Heart right ventricle (tissue), 16 donors: ENCODE measurements at regions of chr4 and their contacts with region 1.

Region 1: DNA sequence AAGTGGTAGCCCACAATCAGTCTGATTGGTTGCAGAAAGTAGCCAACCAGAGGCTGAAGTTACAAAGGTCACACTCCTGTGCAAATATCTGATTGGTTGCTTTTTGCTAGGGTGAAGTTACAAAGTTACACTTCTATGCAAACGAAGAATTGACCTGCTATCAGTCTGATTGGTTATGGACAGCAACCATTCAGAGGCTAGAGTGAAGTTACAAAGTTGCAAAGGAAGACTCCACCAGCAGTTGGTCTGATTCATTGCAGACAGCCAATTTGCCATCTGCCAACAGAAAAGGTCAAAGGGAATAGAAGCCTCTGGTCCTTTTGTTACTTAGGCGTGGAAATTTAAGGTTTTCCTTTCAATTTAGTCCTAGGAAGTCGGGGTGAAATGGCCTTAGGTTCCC is 377.7 kb downstream of the PRDM5 start:
- DNase-seq: no peak
- ATAC-seq: no peak
- H3K4me3 ChIP-seq: no peak overlapping the region
- H3K27ac ChIP-seq: no peak overlapping the region
- H3K4me1 ChIP-seq: no peaks in the 10 kb centered on the region
- H3K27me3 ChIP-seq: no peaks in the 10 kb centered on the region
- CTCF ChIP-seq: no peak

Region 2: DNA sequence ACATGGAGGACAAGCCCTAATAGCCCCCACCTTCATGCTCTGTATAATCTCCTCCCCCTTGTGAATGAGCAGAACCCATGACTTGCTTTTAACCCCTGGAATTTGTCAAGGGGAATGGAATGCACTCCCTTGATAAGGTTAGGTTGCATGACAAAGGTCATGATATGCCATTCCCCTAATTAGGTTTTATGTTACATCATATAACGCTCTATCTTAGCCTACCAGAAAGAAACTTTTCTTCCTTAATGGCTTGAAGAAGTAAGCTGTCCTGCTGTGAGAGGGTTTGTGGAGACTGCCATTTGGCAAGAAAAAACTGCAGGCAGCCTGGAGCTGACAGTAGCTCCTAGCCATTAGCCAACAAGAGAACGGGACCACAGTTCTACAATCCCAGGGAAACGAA is 78.4 kb before region 1 on chr4:
- intact Hi-C with region 1: no loop called
- DNase-seq: no peak
- ATAC-seq: peak in 4 of 8 donors; percentile 37 to 67 (median 40)
- H3K4me3 ChIP-seq: no peak overlapping the region
- H3K27ac ChIP-seq: no peak overlapping the region
- H3K4me1 ChIP-seq: peaks cover 0 to 9% (median 0%) of the 10 kb centered on the region in 9 donors
- H3K27me3 ChIP-seq: no peaks in the 10 kb centered on the region
- CTCF ChIP-seq: no peak

Region 3: GRCh38 chr4:120498678-120499077 is 46.2 kb before region 1 on chr4:
- intact Hi-C with region 1: loop called in 1 of 10 experiments (anchors 1 kb)
- DNase-seq: no peak
- ATAC-seq: no peak
- H3K4me3 ChIP-seq: no peak overlapping the region
- H3K27ac ChIP-seq: no peak overlapping the region
- H3K4me1 ChIP-seq: no peaks in the 10 kb centered on the region
- H3K27me3 ChIP-seq: no peaks in the 10 kb centered on the region
- CTCF ChIP-seq: no peak

Region 4: GRCh38 chr4:121227341-121227792 is 682.5 kb after region 1 on chr4:
- intact Hi-C with region 1: no loop called
- DNase-seq: no peak
- ATAC-seq: no peak
- H3K4me3 ChIP-seq: peak overlapping the region in 1 of 10 donors; percentile 5
- H3K27ac ChIP-seq: peak overlapping the region in 1 of 10 donors; percentile 34
- H3K4me1 ChIP-seq: no peaks in the 10 kb centered on the region
- H3K27me3 ChIP-seq: no peaks in the 10 kb centered on the region
- CTCF ChIP-seq: peak in 1 of 9 donors; percentile 11